SK-N-SH (cell line): ENCODE measurements at regions of chr17 and their contacts with region 1.

Region 1: DNA sequence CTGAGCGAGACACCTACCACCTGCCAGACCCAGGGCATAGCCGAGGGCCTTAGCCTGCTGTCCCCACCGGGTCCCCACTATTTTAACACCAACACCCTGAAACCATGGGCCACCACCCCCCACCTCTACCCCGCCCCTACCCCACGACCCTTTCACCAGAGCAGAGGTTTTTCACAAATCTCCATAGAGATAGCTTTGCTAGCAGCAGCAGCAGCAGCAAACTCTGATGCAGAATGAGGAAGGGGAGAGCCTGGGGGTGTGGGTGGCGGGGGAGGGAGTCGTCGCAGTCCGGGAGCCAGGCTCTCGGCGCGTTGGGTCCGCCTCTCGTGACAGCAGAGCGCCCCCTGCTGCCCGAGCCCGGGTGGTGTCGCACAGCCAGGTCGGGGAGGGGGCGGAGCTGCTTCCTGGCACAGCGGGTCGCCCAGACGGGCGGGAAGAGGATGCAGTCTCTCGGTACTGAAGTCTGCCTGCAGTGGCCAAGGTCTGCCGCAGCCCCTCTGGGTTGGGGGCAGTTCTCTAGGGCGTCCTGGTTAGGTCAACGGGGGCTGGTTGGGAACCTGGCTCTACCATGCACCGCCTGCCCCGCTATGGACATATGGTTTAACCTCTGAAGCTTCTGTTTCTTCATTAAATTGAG is 38.1 kb upstream of the CCDC182 start:
- DNase-seq: peak; percentile 98
- H3K4me3 ChIP-seq: peak overlapping the region in 1 of 2 experiments; percentile 55; a peak in 2 of 4 replicates
- H3K27ac ChIP-seq: peak overlapping the region in 1 of 2 experiments; percentile 99; a peak in 2 of 4 replicates
- H3K4me1 ChIP-seq: peaks cover 0 to 40% of the 10 kb centered on the region in 2 experiments; a peak in 3 of 4 replicates
- H3K27me3 ChIP-seq: peaks cover 22% of the 10 kb centered on the region
- CTCF ChIP-seq: peak; percentile 94
- EP300 ChIP-seq: peak in 1 of 2 experiments; percentile 65; a peak in 2 of 4 replicates
- RAD21 ChIP-seq: peak; percentile 97

Region 2: DNA sequence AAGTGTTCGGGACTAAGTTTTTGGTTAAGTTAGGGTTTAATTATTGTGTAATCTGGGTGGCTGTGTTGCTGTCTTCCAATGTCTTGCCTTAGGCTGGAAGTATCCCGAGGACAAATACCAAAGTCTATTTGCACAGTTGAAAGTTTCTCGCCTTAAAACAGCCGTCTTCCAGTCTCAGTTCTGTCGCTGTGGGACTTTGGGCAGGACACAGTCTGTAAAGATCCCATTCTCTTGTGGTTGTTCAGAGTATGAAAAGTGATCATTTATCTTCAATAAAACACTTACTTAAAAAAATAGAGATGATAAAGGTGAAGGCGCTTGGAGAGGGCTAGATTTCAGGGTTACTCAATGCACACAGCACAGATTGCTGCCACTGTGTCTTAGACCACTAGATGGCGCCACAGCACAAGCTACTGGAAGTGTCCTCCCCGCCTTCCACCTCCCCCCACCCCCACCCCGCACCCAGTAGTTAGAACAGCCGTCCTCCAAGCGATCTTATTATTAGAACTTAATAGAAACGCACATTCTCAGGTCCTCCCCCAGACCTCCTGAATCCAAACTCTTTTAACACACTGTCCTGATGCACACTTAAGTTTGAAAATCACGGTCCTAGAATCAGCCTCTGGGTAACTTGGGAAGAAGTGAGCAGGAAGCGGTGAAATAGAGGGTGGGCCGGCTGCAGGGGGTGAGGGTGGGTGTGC is 652.3 kb before region 1 on chr17:
- CTCF ChIA-PET with region 1: interaction called, 28 read pairs
- POLR2A ChIA-PET with region 1: interaction called, 3 read pairs
- DNase-seq: peak; percentile 98
- H3K4me3 ChIP-seq: peak overlapping the region; percentile 28 to 46; a peak in 2 of 4 replicates
- H3K27ac ChIP-seq: peak overlapping the region in 1 of 2 experiments; percentile 50; a peak in 1 of 4 replicates
- H3K4me1 ChIP-seq: peaks cover 0 to 12% of the 10 kb centered on the region in 2 experiments; a peak in 1 of 4 replicates
- H3K27me3 ChIP-seq: no peaks in the 10 kb centered on the region
- CTCF ChIP-seq: peak; percentile 90
- EP300 ChIP-seq: 0 out of 4 replicates have a peak, but pooled peaks of 1 of the 2 experiments have one; percentile 28
- RAD21 ChIP-seq: peak; percentile 92

Region 3: GRCh38 chr17:57552114-57552624 is 231.1 kb before region 1 on chr17:
- CTCF ChIA-PET with region 1: interaction called, 141 read pairs
- POLR2A ChIA-PET with region 1: interaction called, 5 read pairs
- DNase-seq: peak; percentile 84
- H3K4me3 ChIP-seq: no peak overlapping the region
- H3K27ac ChIP-seq: peak overlapping the region in 1 of 2 experiments; percentile 99; a peak in 2 of 4 replicates
- H3K4me1 ChIP-seq: peaks cover 6 to 86% of the 10 kb centered on the region in 2 experiments; a peak in 2 of 4 replicates
- H3K27me3 ChIP-seq: no peaks in the 10 kb centered on the region
- CTCF ChIP-seq: peak; percentile 52
- EP300 ChIP-seq: peak in 1 of 2 experiments; percentile 61; a peak in 1 of 4 replicates
- RAD21 ChIP-seq: peak; percentile 65

Region 4: GRCh38 chr17:57622683-57623433 is 160.4 kb before region 1 on chr17:
- CTCF ChIA-PET with region 1: interaction called, 25 read pairs
- POLR2A ChIA-PET with region 1: interaction called, 21 read pairs
- DNase-seq: peak; percentile 82
- H3K4me3 ChIP-seq: no peak overlapping the region
- H3K27ac ChIP-seq: peak overlapping the region; percentile 87 to 100
- H3K4me1 ChIP-seq: peaks cover 53 to 84% of the 10 kb centered on the region in 2 experiments
- H3K27me3 ChIP-seq: no peaks in the 10 kb centered on the region
- CTCF ChIP-seq: no peak
- EP300 ChIP-seq: peak; percentile 71 to 97; a peak in 3 of 4 replicates
- RAD21 ChIP-seq: peak; percentile 46

Region 5: DNA sequence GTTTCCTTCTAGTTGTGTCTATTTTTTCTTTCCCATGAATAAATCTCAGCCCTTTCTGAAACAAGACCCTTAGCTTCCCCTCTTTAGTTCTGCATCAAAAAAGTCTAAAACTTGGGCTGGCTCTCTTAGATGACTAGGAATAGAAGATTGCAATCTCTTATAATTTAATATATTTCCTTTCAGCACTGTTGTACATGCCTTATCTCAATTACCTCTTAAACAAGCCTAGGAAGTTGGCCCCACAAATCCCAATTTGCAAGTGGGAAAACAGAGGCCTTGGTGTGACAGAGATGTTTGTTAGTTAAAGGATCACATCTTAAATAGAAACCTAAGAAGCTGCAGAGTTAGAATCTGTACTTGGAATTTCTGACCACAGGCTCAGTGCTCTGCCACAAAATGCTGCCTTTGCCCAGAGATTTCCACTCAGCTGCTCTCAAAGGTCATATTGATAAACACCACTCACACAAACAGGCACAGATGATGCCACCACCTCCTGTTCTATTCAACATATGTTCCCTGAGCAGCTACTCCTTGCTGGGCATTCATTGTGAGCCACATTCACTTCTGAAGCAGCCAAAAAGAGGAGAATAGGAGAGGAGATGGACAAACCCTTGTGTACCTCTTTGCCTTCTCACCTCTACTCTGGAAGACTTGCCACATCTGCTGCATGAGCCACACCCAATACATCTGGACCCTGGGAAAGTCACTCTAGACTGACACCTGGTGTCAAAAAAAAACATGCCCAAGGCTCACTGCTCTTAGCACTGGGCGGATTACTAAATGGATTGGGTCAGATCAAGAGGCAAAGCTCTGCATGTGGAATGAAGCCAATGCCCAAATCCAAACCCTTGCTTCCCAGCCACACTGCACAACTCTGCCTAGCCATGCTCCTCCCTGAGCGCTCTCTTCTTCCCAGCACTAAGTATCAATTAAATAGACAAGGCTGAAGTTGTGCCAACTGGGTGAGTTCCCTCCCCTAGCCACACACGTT is 43.5 kb before region 1 on chr17:
- CTCF ChIA-PET with region 1: interaction called, 86 read pairs
- POLR2A ChIA-PET with region 1: interaction called, 16 read pairs
- DNase-seq: peak; percentile 76
- H3K4me3 ChIP-seq: no peak overlapping the region
- H3K27ac ChIP-seq: peak overlapping the region in 1 of 2 experiments; percentile 96; a peak in 3 of 4 replicates
- H3K4me1 ChIP-seq: peaks cover 0 to 17% of the 10 kb centered on the region in 2 experiments; a peak in 2 of 4 replicates
- H3K27me3 ChIP-seq: peaks cover 12% of the 10 kb centered on the region
- CTCF ChIP-seq: peak; percentile 45
- EP300 ChIP-seq: peak in 1 of 2 experiments; percentile 81; a peak in 2 of 4 replicates
- RAD21 ChIP-seq: peak; percentile 65

Region 6: GRCh38 chr17:57803025-57803424 is 19.8 kb after region 1 on chr17:
- CTCF ChIA-PET with region 1: interaction called, 21 read pairs
- POLR2A ChIA-PET with region 1: no interaction called
- DNase-seq: no peak
- H3K4me3 ChIP-seq: no peak overlapping the region
- H3K27ac ChIP-seq: no peak overlapping the region
- H3K4me1 ChIP-seq: peaks cover 0 to 4% of the 10 kb centered on the region in 2 experiments; a peak in 1 of 4 replicates
- H3K27me3 ChIP-seq: no peaks in the 10 kb centered on the region
- CTCF ChIP-seq: no peak
- EP300 ChIP-seq: no peak
- RAD21 ChIP-seq: no peak